Head of caudate nucleus (tissue), 42 donors: ENCODE measurements at regions of chr3 and their contacts with region 1.

Region 1: DNA sequence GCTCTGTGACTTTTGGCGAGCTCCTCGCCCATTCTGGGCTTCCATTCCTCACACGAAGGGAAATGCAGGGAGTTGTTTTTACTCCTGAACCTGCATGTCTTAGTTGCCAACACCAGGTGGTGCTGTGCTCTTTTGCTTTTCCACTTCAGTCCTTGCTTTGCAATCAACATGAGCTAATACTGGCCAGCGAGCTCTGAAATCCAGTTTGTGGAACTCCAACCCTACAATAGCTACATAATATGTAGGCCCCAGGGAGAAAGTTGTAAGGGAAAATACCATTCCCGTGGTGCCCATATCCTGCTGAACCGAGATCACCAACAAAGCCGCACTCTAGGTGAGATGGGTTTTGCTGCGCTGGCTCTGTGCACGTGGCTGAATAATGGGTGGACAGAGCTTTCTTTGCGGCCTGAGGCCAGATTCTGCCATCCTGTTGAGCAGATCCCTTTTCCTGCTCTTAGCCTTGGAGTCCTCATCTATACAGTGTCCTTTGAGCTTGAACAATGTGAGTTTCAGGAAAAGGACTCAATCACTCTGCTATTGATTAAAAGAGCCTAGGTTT is 25.0 kb downstream of the LSM3 start:
- DNase-seq: peak; percentile 36 to 90 (median 78)

Region 2: GRCh38 chr3:14253022-14253706 is 49.6 kb after region 1 on chr3:
- intact Hi-C with region 1: loop called (anchors 5 kb)
- DNase-seq: no peak

Region 3: DNA sequence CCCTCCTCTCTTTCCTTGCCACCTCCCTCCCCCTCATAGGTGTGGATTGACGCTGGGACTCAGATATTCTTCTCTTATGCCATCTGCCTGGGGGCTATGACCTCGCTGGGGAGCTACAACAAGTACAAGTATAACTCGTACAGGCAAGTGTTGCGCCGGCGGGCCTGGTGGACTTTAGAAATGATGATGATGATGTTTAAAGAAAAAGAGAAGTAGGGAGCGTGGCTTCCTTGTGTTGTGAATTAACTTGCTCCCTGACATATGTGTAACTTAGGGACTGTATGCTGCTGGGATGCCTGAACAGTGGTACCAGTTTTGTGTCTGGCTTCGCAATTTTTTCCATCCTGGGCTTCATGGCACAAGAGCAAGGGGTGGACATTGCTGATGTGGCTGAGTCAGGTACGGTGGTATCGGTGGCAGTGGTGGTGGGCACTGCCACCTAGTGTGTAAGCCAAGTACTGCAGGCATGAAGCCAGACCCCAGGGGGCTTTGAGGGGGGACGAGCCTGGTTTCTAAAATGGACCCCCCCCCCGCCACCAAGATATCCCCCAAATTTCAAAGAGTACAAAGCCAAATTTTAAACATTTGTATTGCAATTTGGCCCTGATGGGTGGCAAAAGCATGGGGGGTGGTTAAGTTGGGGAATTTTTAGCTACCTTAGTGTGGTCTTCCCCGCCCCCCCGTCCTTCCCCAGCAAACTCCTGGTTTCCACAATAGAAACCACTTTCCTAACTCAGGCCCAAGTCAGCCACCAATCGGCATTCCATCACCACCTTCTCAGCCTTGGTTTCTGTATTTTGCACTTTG is 264.4 kb after region 1 on chr3:
- intact Hi-C with region 1: loop called (anchors 5 kb)
- DNase-seq: peak in 33 of 42 donors; percentile 31 to 82 (median 54)